Calu3 (cell line): ENCODE measurements at regions of chrX and their contacts with region 1.

Region 1: DNA sequence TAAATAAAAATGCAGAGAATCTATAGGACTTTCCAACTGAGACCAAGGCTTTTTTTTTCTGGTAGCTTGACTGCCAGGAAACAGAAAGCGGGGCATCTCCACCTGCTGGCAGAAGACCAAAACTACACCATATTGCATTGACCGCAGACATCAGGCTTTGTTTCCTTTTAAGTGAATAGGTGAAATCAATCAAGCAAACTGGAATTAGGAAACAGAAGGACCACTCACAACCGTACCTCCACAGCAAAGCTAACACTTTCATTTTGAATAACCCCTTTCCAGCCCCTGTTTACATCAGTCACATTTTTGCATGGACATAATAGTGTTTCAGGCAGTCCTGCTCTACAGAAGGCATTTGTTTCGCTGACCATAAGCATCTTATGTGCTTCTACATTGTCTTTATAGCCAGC is 218.2 kb downstream of the IDS start:
- DNase-seq: peak; percentile 43
- H3K4me3 Mint-ChIP-seq: no peak overlapping the region
- H3K27ac Mint-ChIP-seq: no peak overlapping the region
- H3K4me1 Mint-ChIP-seq: no peaks in the 10 kb centered on the region
- H3K27me3 Mint-ChIP-seq: no peaks in the 10 kb centered on the region
- CTCF ChIP-seq: peak; percentile 43

Region 2: DNA sequence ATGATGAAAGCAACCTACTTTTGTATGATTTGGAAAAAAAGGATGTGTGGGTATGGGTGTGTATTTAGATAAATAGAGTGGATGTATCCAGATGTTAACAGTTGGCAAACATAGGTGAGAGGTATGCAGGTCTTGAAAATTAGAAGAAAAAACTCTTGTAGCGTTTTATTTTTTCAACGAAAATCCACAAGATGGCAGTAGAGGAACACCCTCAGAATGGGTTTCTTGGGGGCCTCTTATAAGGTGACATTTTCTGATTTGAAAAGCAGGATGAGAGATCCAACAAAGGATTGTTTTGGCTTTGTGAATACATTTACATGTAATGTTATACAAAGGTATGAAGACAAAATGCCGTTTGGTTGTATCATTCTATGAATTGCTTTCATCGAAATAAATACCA is 1237.5 kb before region 1 on chrX:
- CTCF ChIA-PET with region 1: no interaction called
- intact Hi-C with region 1: loop called (anchors 1 kb)
- DNase-seq: peak; percentile 1
- H3K4me3 Mint-ChIP-seq: no peak overlapping the region
- H3K27ac Mint-ChIP-seq: no peak overlapping the region
- H3K4me1 Mint-ChIP-seq: no peaks in the 10 kb centered on the region
- H3K27me3 Mint-ChIP-seq: no peaks in the 10 kb centered on the region
- CTCF ChIP-seq: no peak

Region 3: GRCh38 chrX:148133105-148133725 is 1153.7 kb before region 1 on chrX:
- CTCF ChIA-PET with region 1: no interaction called
- intact Hi-C with region 1: loop called (anchors 1 kb)
- DNase-seq: no peak
- H3K4me3 Mint-ChIP-seq: no peak overlapping the region
- H3K27ac Mint-ChIP-seq: no peak overlapping the region
- H3K4me1 Mint-ChIP-seq: no peaks in the 10 kb centered on the region
- H3K27me3 Mint-ChIP-seq: no peaks in the 10 kb centered on the region
- CTCF ChIP-seq: no peak

Region 4: DNA sequence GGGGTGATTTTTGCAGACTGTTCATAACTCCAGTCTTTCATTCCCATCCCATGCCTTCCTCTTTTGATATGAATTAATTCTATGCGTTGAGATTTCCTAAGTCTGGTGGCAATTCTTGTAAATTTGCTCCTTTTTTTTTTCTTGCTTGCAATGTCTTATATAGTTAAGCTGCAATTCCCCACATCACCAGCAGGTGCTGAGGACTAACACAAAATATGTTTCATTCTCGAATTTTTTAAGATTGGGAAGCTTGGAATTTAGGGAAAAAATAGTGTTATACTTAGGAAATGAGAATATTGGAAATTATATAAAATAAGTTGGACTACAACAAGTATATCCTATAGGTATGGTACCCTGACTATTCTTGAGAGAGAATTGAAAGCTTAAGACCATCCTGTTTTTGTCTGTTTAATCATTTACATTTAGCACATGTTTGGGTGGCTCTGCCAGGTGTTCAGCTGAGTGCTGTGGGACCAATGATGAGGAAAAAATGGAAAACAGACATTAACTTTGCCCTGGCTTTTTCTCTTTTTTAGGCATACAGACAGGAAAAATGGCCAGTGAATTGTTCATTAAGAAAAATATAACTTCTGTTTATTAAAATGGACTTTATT is 756.4 kb before region 1 on chrX:
- CTCF ChIA-PET with region 1: no interaction called
- intact Hi-C with region 1: loop called (anchors 5 kb)
- DNase-seq: peak; percentile 8
- H3K4me3 Mint-ChIP-seq: no peak overlapping the region
- H3K27ac Mint-ChIP-seq: no peak overlapping the region
- H3K4me1 Mint-ChIP-seq: no peaks in the 10 kb centered on the region
- H3K27me3 Mint-ChIP-seq: no peaks in the 10 kb centered on the region
- CTCF ChIP-seq: peak; percentile 33

Region 5: GRCh38 chrX:148661035-148661434 is 625.9 kb before region 1 on chrX:
- CTCF ChIA-PET with region 1: no interaction called
- intact Hi-C with region 1: no loop called
- DNase-seq: no peak
- H3K4me3 Mint-ChIP-seq: no peak overlapping the region
- H3K27ac Mint-ChIP-seq: peak overlapping the region; percentile 82
- H3K4me1 Mint-ChIP-seq: no peaks in the 10 kb centered on the region
- H3K27me3 Mint-ChIP-seq: no peaks in the 10 kb centered on the region
- CTCF ChIP-seq: no peak

Region 6: GRCh38 chrX:149145845-149146285 is 141.1 kb before region 1 on chrX:
- CTCF ChIA-PET with region 1: no interaction called
- intact Hi-C with region 1: no loop called
- DNase-seq: no peak
- H3K4me3 Mint-ChIP-seq: no peak overlapping the region
- H3K27ac Mint-ChIP-seq: no peak overlapping the region
- H3K4me1 Mint-ChIP-seq: no peaks in the 10 kb centered on the region
- H3K27me3 Mint-ChIP-seq: no peaks in the 10 kb centered on the region
- CTCF ChIP-seq: no peak

Region 7: GRCh38 chrX:149198980-149199732 is 87.8 kb before region 1 on chrX:
- CTCF ChIA-PET with region 1: no interaction called
- intact Hi-C with region 1: no loop called
- DNase-seq: no peak
- H3K4me3 Mint-ChIP-seq: no peak overlapping the region
- H3K27ac Mint-ChIP-seq: no peak overlapping the region
- H3K4me1 Mint-ChIP-seq: no peaks in the 10 kb centered on the region
- H3K27me3 Mint-ChIP-seq: no peaks in the 10 kb centered on the region
- CTCF ChIP-seq: no peak